ENCODE measurements at regions of chr20 and their contacts with region 1.

Region 1: DNA sequence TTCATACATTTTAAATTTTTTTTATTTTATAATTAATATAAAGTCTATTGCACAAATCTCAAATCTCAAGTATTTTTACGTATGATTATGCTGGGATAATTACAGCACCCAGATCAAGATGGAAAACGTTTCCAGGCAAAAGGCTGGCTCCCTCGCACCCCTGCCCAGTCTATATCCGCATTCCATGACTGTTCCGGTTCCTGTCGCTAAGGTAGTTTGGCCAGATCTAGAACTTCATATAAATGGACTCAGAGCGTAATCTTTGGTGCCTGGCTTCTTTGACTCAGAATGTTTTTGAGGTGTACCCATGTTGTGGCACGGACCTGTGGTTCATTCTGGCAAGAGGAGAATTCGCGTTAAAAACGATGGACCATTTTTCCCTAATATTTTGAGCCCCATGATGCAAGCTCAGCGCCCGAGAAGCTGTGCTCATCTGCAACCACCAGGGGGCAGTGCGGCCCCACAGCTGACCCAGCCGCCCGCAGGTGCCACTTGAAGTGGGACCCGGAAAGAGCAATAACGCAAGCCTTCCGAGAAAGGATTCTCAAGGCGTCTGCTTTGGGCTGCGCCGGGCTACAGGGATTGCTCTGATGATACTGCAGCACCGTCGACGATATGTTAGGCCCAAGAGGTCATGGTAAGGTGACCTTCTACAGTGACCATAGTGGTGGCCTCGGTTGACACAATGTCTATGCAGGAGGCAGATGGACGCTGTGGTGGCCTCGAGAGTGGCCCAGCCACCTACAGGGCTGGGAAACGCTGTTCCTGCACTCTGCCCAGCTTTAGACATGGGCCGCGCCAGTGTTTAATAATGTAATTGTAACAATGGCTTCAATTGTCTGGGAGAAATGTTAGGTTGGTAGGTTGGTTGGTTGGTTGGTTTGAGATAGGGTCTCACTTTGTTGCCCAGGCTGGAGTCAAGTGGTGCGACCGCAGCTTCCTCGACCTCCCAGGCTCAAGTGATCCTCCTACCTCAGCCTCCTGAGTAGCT is 160.1 kb downstream of the ZMYND8 start:
- DNase-seq: peak; percentile 44 to 96 (median 76)

Region 2: GRCh38 chr20:47133574-47134456 is 62.6 kb before region 1 on chr20:
- intact Hi-C with region 1: no loop called
- DNase-seq: no peak

Region 3: DNA sequence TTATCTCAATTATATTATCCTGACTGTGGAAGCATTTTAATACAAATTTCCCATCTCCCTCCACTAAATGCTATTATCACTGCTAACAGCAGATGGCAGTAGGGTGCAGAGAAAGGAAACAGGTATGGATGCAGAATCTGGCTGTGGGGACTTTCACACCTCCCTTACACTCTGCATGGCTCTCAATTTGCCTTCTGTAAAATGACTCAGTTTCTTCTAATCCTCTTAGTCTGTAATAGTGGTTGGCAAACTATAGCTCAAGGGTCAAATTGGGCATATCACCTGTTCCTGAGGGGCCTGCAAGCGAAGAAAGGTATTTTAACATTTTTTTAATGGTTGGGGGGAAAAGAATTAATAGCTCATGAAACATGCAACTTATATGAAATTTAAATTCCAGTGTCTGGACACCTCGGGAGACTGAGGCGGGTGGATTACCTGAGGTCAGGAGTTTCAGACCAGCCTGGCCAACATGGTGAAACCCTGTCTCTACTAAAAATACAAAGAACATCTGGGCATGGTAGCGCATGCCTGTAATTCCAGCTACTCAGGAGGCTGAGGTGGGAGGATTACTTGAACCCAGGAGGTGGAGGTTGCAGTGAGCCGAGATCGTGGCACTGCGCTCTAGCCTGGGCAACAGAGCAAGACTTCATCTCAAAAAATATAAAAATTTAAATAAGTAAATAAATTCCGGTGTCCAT is 76.7 kb after region 1 on chr20:
- intact Hi-C with region 1: loop called (anchors 5 kb)
- DNase-seq: peak in 2 of 10 donors; percentile 38 to 50

Region 4: GRCh38 chr20:47704755-47705493 is 508.5 kb after region 1 on chr20:
- intact Hi-C with region 1: no loop called
- DNase-seq: peak in 6 of 10 donors; percentile 33 to 90 (median 63)